CD14-positive monocyte (primary cell): ENCODE measurements at regions of chr16 and their contacts with region 1.

Region 1: DNA sequence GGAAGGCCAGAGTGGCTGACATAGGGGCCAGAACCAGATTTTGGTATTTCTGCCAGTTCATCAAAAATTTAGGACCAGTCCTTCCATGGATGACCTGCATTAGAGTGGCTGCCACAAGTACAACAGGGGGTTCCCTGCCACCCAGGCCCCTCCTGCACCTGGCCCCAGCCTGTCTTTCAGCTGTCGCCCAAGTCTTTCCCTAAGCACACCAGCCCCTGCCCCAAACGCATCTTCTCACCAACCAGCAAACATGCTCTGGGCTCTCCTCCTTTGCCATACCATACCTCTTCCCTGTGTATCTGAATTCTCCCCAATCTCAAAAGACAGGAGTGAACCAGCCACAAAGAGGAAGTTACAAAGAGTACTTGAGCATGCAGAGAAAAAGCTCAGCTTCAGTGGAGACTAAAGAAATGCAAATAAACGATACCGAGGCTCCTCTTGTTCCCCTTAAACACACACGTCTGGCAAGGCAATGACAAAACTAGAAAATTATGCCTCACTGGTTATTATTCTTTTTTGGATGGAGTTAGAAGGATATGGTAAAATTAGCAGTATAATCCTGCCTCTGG is 130.6 kb downstream of the DYNLRB2 start:
- DNase-seq: peak; percentile 9 to 22 (median 17)
- H3K4me3 ChIP-seq: peak overlapping the region in 1 of 3 experiments; percentile 12
- H3K4me3 Mint-ChIP-seq: peak overlapping the region in 1 of 2 donors; percentile 17
- H3K27ac ChIP-seq: no peak overlapping the region
- H3K27ac Mint-ChIP-seq: peak overlapping the region in 4 of 7 donors; percentile 26 to 68 (median 42)
- H3K4me1 ChIP-seq: peaks cover 26 to 35% of the 10 kb centered on the region in 2 donors
- H3K4me1 Mint-ChIP-seq: peaks cover 32% of the 10 kb centered on the region
- H3K27me3 ChIP-seq: no peaks in the 10 kb centered on the region
- H3K27me3 Mint-ChIP-seq: peaks cover 5 to 13% (median 13%) of the 10 kb centered on the region in 3 donors
- CTCF ChIP-seq: no peak

Region 2: DNA sequence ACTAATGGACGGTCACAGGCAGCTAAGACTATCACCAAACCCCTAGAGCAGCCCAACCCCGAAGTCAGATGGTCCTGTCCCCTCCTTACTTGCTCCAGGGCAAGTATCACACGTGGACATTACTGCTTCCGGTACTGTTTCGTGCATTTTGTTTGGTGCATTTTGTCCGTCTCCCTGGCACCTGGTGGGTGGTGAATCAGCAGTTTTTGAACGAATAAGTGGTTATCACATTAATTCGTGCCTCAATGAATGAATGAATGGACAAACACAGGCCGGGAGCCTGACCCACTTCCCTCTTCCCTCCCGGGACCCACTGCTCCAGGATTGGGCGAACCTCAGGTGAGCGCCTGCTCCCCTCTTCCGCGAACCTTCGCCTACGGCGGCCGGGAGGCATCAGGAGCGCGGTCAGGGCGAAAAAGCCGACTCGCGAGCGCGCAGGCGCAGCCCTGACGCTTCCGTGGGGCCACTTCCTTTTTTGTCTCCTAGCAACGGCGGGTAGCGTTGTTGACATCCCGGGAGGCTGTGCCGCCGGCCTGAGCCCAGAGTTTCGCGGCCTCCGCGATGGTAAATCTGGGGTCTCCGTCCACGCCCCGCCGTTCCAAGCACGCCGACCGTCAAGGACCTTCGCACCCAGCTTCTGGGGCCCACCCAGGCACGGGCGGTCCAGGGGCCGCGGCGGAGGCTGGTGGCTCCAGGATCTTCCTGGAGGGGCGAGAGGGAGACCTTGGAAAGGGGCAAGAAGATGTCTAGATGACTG is 130.7 kb before region 1 on chr16 and contains the start of gene DYNLRB2:
- intact Hi-C with region 1: loop called in 1 of 2 experiments (anchors 10 kb)
- DNase-seq: peak; percentile 91 to 93 (median 91)
- H3K4me3 ChIP-seq: peak within 1 kb of the TSS; percentile 73 to 90 (median 85)
- H3K4me3 Mint-ChIP-seq: peak within 1 kb of the TSS; percentile 86 to 93
- H3K27ac ChIP-seq: peak within 1 kb of the TSS; percentile 34 to 84
- H3K27ac Mint-ChIP-seq: peak within 1 kb of the TSS; percentile 90 to 97 (median 92)
- H3K4me1 ChIP-seq: peaks cover 11 to 12% of the 10 kb centered on the region in 2 donors
- H3K4me1 Mint-ChIP-seq: peaks cover 15% of the 10 kb centered on the region
- H3K27me3 ChIP-seq: peaks cover 0 to 4% of the 10 kb centered on the region in 2 donors
- H3K27me3 Mint-ChIP-seq: peaks cover 4 to 11% (median 10%) of the 10 kb centered on the region in 3 donors
- CTCF ChIP-seq: no peak
- polyA plus RNA-seq, gene DYNLRB2: not detected

Region 3: GRCh38 chr16:80804056-80804450 is 132.7 kb after region 1 on chr16:
- intact Hi-C with region 1: loop called in 1 of 2 experiments (anchors 5 kb)
- DNase-seq: peak; percentile 22 to 37 (median 28)
- H3K4me3 ChIP-seq: peak overlapping the region; percentile 43 to 82 (median 73)
- H3K4me3 Mint-ChIP-seq: peak overlapping the region; percentile 99
- H3K27ac ChIP-seq: no peak overlapping the region
- H3K27ac Mint-ChIP-seq: peak overlapping the region; percentile 33 to 94 (median 86)
- H3K4me1 ChIP-seq: peaks cover 30 to 33% of the 10 kb centered on the region in 2 donors
- H3K4me1 Mint-ChIP-seq: peaks cover 14% of the 10 kb centered on the region
- H3K27me3 ChIP-seq: peaks cover 6 to 12% of the 10 kb centered on the region in 2 donors
- H3K27me3 Mint-ChIP-seq: peaks cover 8 to 14% (median 11%) of the 10 kb centered on the region in 3 donors
- CTCF ChIP-seq: no peak

Region 4: DNA sequence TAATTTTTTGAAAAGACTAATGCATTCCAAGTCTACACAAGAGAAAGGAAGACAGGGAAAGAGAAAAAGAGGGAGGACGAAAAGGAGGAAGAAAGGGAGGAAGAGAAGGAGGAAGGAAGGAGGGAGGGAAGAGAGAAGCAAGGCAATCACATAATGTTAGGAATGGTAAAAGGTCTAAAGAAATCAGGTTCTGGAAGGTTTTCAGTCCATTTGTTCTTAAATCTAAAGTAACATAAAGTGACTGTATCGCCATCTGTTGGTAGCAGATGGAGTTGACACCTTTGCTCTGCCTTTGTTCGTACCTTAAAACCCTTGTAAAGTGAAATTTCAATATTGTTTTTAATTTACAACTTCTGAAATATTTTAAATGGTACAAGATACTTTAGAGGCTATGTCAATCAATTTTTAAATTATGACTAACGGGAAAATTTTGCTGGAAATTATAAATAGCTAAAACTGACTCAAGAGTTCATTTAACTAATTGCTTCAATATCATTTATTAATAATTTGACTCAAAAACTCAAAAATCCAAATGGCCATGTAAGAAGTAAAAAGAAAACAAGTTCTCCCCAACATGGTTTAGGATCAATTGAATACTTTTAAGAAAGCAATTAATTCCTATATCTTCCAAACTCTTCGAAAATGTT is 153.5 kb after region 1 on chr16:
- intact Hi-C with region 1: loop called in 1 of 2 experiments (anchors 10 kb)
- DNase-seq: peak; percentile 46 to 64 (median 48)
- H3K4me3 ChIP-seq: no peak overlapping the region
- H3K4me3 Mint-ChIP-seq: no peak overlapping the region
- H3K27ac ChIP-seq: no peak overlapping the region
- H3K27ac Mint-ChIP-seq: no peak overlapping the region
- H3K4me1 ChIP-seq: no peaks in the 10 kb centered on the region
- H3K4me1 Mint-ChIP-seq: no peaks in the 10 kb centered on the region
- H3K27me3 ChIP-seq: no peaks in the 10 kb centered on the region
- H3K27me3 Mint-ChIP-seq: no peaks in the 10 kb centered on the region
- CTCF ChIP-seq: peak; percentile 87